Activated T-helper 2 cell treated with anti-CD3 and anti-CD28 coated beads, Interferon-gamma antibody, Interleukin-2, Interleukin-4, amounts not matched to agents 10 μg/mL and 5 μg/mL and 100 μg/mL, durations not matched to agents 14 hours and 24 hours and 36 hours (primary cell): ENCODE measurements at regions of chr6 and their contacts with region 1.

Region 1: GRCh38 chr6:156776840-156777576 is at the start of gene ARID1B:
- DNase-seq: peak; percentile 74
- H3K4me3 Mint-ChIP-seq: peak within 1 kb of the TSS; percentile 95
- H3K27ac Mint-ChIP-seq: peak within 1 kb of the TSS; percentile 97
- H3K4me1 Mint-ChIP-seq: peaks cover 33% of the 10 kb centered on the region
- H3K27me3 Mint-ChIP-seq: no peaks in the 10 kb centered on the region
- total RNA-seq, gene ARID1B: 65.6 and 66.3 TPM in 2 replicates

Region 2: GRCh38 chr6:156564127-156564806 is 212.7 kb before region 1 on chr6:
- intact Hi-C with region 1: loop called (anchors 10 kb)
- DNase-seq: peak; percentile 61
- H3K4me3 Mint-ChIP-seq: no peak overlapping the region
- H3K27ac Mint-ChIP-seq: no peak overlapping the region
- H3K4me1 Mint-ChIP-seq: peaks cover 7% of the 10 kb centered on the region
- H3K27me3 Mint-ChIP-seq: peaks cover 5% of the 10 kb centered on the region

Region 3: GRCh38 chr6:156857573-156857972 is 80.6 kb after region 1 on chr6:
- intact Hi-C with region 1: loop called (anchors 1 kb)
- DNase-seq: no peak
- H3K4me3 Mint-ChIP-seq: no peak overlapping the region
- H3K27ac Mint-ChIP-seq: peak overlapping the region; percentile 74
- H3K4me1 Mint-ChIP-seq: peaks cover 49% of the 10 kb centered on the region
- H3K27me3 Mint-ChIP-seq: no peaks in the 10 kb centered on the region

Region 4: GRCh38 chr6:156953479-156954146 is 176.6 kb after region 1 on chr6:
- intact Hi-C with region 1: loop called (anchors 5 kb)
- DNase-seq: no peak
- H3K4me3 Mint-ChIP-seq: no peak overlapping the region
- H3K27ac Mint-ChIP-seq: no peak overlapping the region
- H3K4me1 Mint-ChIP-seq: peaks cover 49% of the 10 kb centered on the region
- H3K27me3 Mint-ChIP-seq: no peaks in the 10 kb centered on the region

Region 5: GRCh38 chr6:157107915-157108651 is 331.1 kb after region 1 on chr6:
- intact Hi-C with region 1: loop called (anchors 5 kb)
- DNase-seq: no peak
- H3K4me3 Mint-ChIP-seq: peak overlapping the region; percentile 0
- H3K27ac Mint-ChIP-seq: peak overlapping the region; percentile 81
- H3K4me1 Mint-ChIP-seq: peaks cover 56% of the 10 kb centered on the region
- H3K27me3 Mint-ChIP-seq: no peaks in the 10 kb centered on the region